ENCODE measurements at regions of chr11 and their contacts with region 1.

Region 1: GRCh38 chr11:62372871-62373270 is 35.6 kb downstream of the ASRGL1 start:
- DNase-seq: no peak
- ATAC-seq: no peak
- H3K4me3 ChIP-seq: no peak overlapping the region
- H3K27ac ChIP-seq: no peak overlapping the region
- H3K4me1 ChIP-seq: no peaks in the 10 kb centered on the region
- H3K27me3 ChIP-seq: no peaks in the 10 kb centered on the region
- CTCF ChIP-seq: no peak
- EP300 ChIP-seq: no peak
- POLR2A ChIP-seq: no peak
- RAD21 ChIP-seq: no peak

Region 2: DNA sequence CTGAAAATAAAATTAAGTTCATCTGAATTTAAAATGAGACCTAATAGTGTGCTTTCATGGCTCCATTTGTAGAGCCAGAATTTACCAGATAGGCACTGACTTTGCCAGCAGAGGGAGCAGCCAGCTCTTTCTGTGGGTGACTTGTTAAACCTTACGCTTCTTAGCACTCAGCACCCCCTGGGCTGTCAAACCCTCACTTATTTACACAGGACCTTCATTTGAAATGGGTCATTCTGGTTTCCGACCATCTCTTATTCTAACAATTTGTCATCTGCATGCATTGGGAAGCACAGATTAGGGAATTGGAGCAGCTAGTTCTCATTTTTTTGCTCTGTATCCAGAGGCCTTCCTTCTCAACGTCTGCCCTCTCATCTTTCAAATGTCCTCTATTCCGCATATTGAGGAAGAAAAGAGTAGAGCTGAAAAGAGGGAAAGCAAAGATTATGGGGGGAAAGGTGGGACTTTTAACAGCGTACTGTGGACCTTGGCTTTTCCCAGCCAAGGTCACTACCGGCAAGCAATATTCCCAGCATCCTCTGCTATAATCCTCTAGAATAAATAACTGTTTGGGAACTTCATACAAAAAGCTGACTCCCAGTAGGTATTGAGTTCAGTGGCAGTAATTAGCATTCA is 32.5 kb before region 1 on chr11:
- CTCF ChIA-PET with region 1: interaction called, 6 read pairs
- POLR2A ChIA-PET with region 1: no interaction called
- in situ Hi-C with region 1: no loop called
- intact Hi-C with region 1: loop called (anchors 1 kb)
- DNase-seq: peak; percentile 60
- ATAC-seq: peak; percentile 55
- H3K4me3 ChIP-seq: peak overlapping the region; percentile 18 to 51 (median 19); a peak in 4 of 6 replicates
- H3K27ac ChIP-seq: peak overlapping the region; percentile 82
- H3K4me1 ChIP-seq: peaks cover 71% of the 10 kb centered on the region
- H3K27me3 ChIP-seq: peaks cover 2 to 4% of the 10 kb centered on the region in 2 experiments; a peak in 2 of 5 replicates
- CTCF ChIP-seq: peak; percentile 57
- EP300 ChIP-seq: peak in 1 of 2 experiments; percentile 57; a peak in 1 of 4 replicates
- POLR2A ChIP-seq: no peak
- RAD21 ChIP-seq: no peak; the same call in 1 of the 2 replicates